ENCODE measurements at regions of chr6 and their contacts with region 1.

Region 1: GRCh38 chr6:147506704-147507114 is 1.8 kb upstream of the SAMD5 start:
- DNase-seq: peak; percentile 39
- H3K4me3 ChIP-seq: peak overlapping the region in 2 of 3 experiments; percentile 40 to 79
- H3K27ac ChIP-seq: no peak overlapping the region
- H3K4me1 ChIP-seq: peaks cover 17% of the 10 kb centered on the region
- H3K27me3 ChIP-seq: peaks cover 4% of the 10 kb centered on the region
- CTCF ChIP-seq: peak; percentile 56 to 91

Region 2: GRCh38 chr6:147322299-147323162 is 184.2 kb before region 1 on chr6:
- CTCF ChIA-PET with region 1: no interaction called
- dilution Hi-C with region 1: no loop called
- in situ Hi-C with region 1: no loop called
- intact Hi-C with region 1: no loop called
- DNase-seq: no peak
- H3K4me3 ChIP-seq: no peak overlapping the region
- H3K27ac ChIP-seq: no peak overlapping the region
- H3K4me1 ChIP-seq: no peaks in the 10 kb centered on the region
- H3K27me3 ChIP-seq: no peaks in the 10 kb centered on the region
- CTCF ChIP-seq: no peak

Region 3: DNA sequence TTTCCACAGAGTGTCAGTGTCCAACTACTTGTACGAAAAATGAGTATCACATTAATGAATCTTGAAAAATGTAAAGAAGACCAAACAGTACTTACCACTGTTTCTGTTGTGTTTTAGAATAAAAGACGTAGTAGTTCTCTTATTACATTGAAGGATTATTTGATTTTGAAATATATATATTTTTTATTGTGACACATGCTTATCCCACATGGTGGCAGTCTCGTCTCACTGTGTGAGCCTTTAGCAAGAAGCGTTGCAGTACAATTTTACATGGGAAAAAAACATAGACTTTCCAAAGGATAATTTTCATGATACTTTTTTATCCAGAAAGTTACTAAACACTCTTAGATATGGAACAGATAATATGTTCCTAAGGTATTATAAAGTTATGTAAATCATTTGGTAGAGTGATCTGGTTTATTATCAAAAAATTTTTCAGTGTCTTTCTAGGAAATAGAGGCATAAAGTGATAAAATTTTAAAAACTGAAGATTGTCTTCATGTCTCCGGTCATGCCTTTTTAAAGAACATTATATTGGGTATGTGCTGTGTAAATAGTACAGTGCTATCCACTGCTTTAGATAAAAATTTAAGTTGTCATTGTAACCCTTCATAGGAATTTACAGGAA is 115.7 kb before region 1 on chr6:
- CTCF ChIA-PET with region 1: no interaction called
- dilution Hi-C with region 1: no loop called
- in situ Hi-C with region 1: no loop called
- intact Hi-C with region 1: loop called (anchors 2 kb)
- DNase-seq: no peak
- H3K4me3 ChIP-seq: no peak overlapping the region
- H3K27ac ChIP-seq: no peak overlapping the region
- H3K4me1 ChIP-seq: no peaks in the 10 kb centered on the region
- H3K27me3 ChIP-seq: no peaks in the 10 kb centered on the region
- CTCF ChIP-seq: peak; percentile 34 to 57

Region 4: GRCh38 chr6:147468634-147469033 is 38.1 kb before region 1 on chr6:
- CTCF ChIA-PET with region 1: no interaction called
- dilution Hi-C with region 1: no loop called
- in situ Hi-C with region 1: no loop called
- intact Hi-C with region 1: no loop called
- DNase-seq: no peak
- H3K4me3 ChIP-seq: no peak overlapping the region
- H3K27ac ChIP-seq: no peak overlapping the region
- H3K4me1 ChIP-seq: no peaks in the 10 kb centered on the region
- H3K27me3 ChIP-seq: no peaks in the 10 kb centered on the region
- CTCF ChIP-seq: no peak

Region 5: DNA sequence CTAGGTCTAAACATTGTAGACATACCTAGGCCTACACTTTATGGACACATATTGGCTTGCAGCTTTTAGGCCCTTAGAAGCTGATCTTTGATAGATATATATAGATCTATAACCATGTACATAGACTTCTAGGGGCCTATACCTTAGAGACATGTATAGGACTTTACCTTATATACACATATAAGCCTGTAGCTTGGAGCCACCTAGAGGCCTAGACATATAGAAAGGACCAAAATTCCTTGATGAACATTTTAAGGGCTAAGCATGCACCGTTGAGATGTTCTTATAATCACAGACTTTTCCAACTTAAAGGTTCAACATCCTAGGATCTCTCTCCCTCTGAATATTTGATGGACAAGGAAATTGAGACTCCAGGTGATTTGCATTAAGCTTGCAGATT is 464.3 kb after region 1 on chr6:
- CTCF ChIA-PET with region 1: no interaction called
- dilution Hi-C with region 1: no loop called
- in situ Hi-C with region 1: loop called in 1 of 2 experiments (anchors 25 kb)
- intact Hi-C with region 1: loop called (anchors 1 kb)
- DNase-seq: peak; percentile 14
- H3K4me3 ChIP-seq: no peak overlapping the region
- H3K27ac ChIP-seq: no peak overlapping the region
- H3K4me1 ChIP-seq: peaks cover 13% of the 10 kb centered on the region
- H3K27me3 ChIP-seq: no peaks in the 10 kb centered on the region
- CTCF ChIP-seq: peak; percentile 35 to 52

Region 6: DNA sequence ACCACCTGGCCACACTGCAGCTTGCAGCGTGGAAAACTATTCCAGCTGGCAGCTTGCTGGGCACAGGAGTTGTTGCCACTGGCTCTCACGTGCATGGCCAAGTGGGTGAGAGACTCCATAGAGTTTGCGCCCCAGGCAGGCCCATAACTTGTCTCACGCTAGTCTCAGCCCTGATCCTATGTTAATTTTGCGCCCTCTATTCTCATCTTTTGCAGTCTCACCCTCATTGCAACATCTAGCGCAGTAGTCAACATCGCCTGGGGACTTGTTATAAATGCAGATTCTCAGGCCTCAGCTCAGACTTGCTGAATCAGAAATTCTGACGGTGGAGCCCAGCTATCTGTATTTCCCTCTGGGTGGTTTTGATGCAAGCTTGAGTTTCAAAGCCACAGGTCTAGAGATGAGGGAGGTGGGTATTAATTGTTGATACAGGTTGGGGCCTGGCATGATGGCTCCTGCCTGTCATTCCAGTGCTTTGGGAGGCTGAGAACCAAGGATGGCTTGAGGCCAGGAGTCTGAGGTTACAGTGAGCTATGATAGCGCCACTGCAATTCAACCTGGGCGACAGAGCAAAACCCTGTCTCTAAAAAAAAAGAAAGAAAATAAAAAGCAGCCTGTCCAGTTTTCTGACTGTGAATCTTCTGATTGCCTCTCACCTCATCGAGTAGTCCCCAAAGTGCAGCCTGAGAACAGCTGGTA is 651.0 kb after region 1 on chr6:
- CTCF ChIA-PET with region 1: no interaction called
- dilution Hi-C with region 1: loop called (anchors 25 kb)
- in situ Hi-C with region 1: loop called (anchors 10 kb)
- intact Hi-C with region 1: no loop called
- DNase-seq: peak; percentile 1
- H3K4me3 ChIP-seq: no peak overlapping the region
- H3K27ac ChIP-seq: no peak overlapping the region
- H3K4me1 ChIP-seq: peaks cover 6% of the 10 kb centered on the region
- H3K27me3 ChIP-seq: no peaks in the 10 kb centered on the region
- CTCF ChIP-seq: no peak

Region 7: GRCh38 chr6:148250975-148251685 is 744.4 kb after region 1 on chr6:
- CTCF ChIA-PET with region 1: no interaction called
- dilution Hi-C with region 1: no loop called
- in situ Hi-C with region 1: no loop called
- intact Hi-C with region 1: loop called (anchors 1 kb)
- DNase-seq: peak; percentile 52
- H3K4me3 ChIP-seq: no peak overlapping the region
- H3K27ac ChIP-seq: no peak overlapping the region
- H3K4me1 ChIP-seq: no peaks in the 10 kb centered on the region
- H3K27me3 ChIP-seq: no peaks in the 10 kb centered on the region
- CTCF ChIP-seq: peak; percentile 47 to 74

Measured in mammary epithelial cell (primary cell).